Ovary (tissue), 10 donors: ENCODE measurements at regions of chr19 and their contacts with region 1.

Region 1: GRCh38 chr19:2227415-2228156 is 8.5 kb downstream of the PLEKHJ1 start:
- DNase-seq: no peak
- H3K4me3 ChIP-seq: no peak overlapping the region
- H3K27ac ChIP-seq: no peak overlapping the region
- H3K4me1 ChIP-seq: no peaks in the 10 kb centered on the region
- H3K27me3 ChIP-seq: no peaks in the 10 kb centered on the region
- CTCF ChIP-seq: no peak
- EP300 ChIP-seq: no peak
- POLR2A ChIP-seq: no peak

Region 2: GRCh38 chr19:2154587-2155075 is 73.0 kb before region 1 on chr19:
- intact Hi-C with region 1: no loop called
- DNase-seq: no peak
- H3K4me3 ChIP-seq: no peak overlapping the region
- H3K27ac ChIP-seq: no peak overlapping the region
- H3K4me1 ChIP-seq: peaks cover 10% of the 10 kb centered on the region
- H3K27me3 ChIP-seq: no peaks in the 10 kb centered on the region
- CTCF ChIP-seq: no peak
- EP300 ChIP-seq: no peak
- POLR2A ChIP-seq: no peak

Region 3: DNA sequence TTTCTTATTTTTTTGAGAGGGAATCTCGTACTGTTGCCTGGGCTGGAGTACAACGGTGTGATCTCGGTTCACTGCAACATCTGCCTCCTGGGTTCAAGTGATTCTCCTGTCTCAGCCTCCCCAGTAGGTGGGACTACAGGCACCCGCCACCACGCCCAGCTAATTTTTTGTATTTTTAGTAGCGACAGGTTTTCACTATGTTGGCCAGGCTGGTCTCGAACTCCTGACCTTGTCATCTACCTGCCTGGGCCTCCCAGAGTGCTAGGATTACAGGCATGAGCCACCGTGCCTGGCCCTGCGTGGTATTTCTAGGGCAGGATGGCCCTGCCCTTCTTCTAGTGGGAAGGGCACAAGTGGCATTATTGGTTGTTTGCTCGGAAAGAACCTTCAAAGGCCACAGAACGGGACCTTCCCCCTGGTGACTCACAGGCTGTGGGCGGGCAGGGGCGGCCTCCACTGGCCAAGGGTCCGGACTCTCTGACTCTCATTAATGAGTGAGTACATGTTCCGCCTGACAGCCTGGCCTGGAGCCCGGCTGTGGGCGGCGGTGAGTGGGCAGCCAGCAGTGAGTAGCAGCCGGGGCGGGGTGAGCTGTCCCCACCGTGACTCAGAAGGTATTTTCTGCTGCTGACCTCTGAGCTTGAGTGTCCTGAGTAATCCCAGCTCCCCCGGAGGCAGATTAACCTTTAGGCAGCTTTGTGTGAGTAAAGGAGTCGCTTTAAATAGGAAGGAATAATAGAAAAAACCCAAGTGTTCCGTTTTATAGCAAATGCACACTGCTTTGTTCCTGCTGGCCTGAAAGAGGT is 58.8 kb before region 1 on chr19:
- intact Hi-C with region 1: loop called in 3 of 4 experiments (anchors 5 to 10 kb)
- DNase-seq: peak; percentile 91 to 95 (median 94)
- H3K4me3 ChIP-seq: no peak overlapping the region
- H3K27ac ChIP-seq: peak overlapping the region; percentile 9 to 61
- H3K4me1 ChIP-seq: peaks cover 41% of the 10 kb centered on the region
- H3K27me3 ChIP-seq: no peaks in the 10 kb centered on the region
- CTCF ChIP-seq: no peak
- EP300 ChIP-seq: peak; percentile 29
- POLR2A ChIP-seq: no peak